Activated CD4-positive, alpha-beta memory T cell treated with anti-CD3 and anti-CD28 coated beads, Interleukin-2, amount 10 ng/mL, durations not matched to agents 7 days and 5 days (primary cell): ENCODE measurements at regions of chr11 and their contacts with region 1.

Region 1: DNA sequence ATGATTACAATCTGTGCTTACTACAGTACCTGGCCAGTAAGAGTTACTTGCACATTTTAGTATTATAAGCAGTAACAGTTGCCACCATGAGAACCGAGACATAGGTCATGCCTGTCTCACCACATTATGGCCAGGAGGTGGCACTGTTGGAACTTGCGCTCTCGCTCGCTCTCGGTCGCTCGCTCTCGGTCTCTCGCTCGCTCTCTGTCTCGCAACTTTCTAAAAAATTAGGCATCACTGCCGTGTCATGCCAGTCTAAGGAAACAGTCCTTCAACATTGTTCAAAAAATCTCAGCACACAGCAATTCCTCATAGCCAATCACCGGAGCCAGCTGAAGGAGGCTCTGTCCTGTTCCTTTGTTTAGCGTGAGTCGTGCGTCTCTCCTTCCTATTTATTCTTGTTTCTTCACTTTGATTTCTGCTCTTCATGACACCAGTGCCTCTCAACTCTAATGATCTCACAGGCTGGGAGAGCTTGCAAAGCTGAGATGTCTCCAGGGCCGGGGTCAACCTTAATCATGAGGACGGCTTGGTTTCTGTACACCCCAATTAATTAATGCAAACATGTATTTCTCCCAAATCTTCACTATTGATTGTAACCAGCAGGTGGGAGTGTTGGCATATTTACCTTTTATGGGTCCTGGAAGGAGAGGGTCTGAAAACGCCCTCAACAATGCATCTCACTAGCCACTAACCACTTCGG is 6.3 kb upstream of the ADAMTS8 start:
- DNase-seq: peak; percentile 74
- H3K4me3 Mint-ChIP-seq: no peak overlapping the region
- H3K27ac Mint-ChIP-seq: no peak overlapping the region
- H3K4me1 Mint-ChIP-seq: peaks cover 25% of the 10 kb centered on the region
- H3K27me3 Mint-ChIP-seq: peaks cover 33% of the 10 kb centered on the region

Region 2: GRCh38 chr11:130213143-130213978 is 221.3 kb before region 1 on chr11:
- CTCF ChIA-PET with region 1: interaction called, 28 read pairs
- POLR2A ChIA-PET with region 1: interaction called, 3 read pairs
- DNase-seq: peak; percentile 71
- H3K4me3 Mint-ChIP-seq: no peak overlapping the region
- H3K27ac Mint-ChIP-seq: no peak overlapping the region
- H3K4me1 Mint-ChIP-seq: no peaks in the 10 kb centered on the region
- H3K27me3 Mint-ChIP-seq: peaks cover 4% of the 10 kb centered on the region

Region 3: DNA sequence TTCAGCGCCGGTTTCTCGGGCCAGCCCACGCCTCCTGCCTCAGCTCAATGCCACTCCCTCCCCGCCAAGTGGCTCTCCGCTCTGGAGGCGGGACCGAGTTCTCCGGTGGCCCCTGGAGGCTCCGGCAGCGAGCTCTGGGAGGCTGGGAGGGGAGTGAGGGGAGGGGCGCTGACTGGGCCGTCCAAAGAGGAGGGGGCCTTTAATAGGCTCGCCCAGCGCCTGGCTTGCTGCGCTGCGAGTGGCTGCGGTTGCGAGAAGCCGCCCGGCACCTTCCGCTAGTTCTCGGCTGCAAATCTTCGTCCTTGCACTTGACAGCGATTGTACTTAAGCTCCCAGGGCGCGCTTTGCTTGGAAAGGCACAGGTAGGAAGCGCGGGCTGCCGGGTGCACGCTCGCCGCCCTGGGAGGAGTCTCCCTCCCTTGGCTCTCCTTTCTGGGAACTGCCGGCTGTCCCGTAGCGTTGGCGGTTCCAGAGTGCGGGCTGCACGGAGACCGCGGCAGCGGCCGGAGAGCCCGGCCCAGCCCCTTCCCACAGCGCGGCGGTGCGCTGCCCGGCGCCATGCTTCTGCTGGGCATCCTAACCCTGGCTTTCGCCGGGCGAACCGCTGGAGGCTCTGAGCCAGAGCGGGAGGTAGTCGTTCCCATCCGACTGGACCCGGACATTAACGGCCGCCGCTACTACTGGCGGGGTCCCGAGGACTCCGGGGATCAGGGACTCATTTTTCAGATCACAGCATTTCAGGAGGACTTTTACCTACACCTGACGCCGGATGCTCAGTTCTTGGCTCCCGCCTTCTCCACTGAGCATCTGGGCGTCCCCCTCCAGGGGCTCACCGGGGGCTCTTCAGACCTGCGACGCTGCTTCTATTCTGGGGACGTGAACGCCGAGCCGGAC is 14.0 kb after region 1 on chr11 and contains the start of gene ADAMTS15:
- CTCF ChIA-PET with region 1: interaction called, 28 read pairs
- POLR2A ChIA-PET with region 1: no interaction called
- DNase-seq: peak; percentile 35
- H3K4me3 Mint-ChIP-seq: peak within 1 kb of the TSS; percentile 48
- H3K27ac Mint-ChIP-seq: no peak within 1 kb of the TSS
- H3K4me1 Mint-ChIP-seq: peaks cover 13% of the 10 kb centered on the region
- H3K27me3 Mint-ChIP-seq: peaks cover 62% of the 10 kb centered on the region
- total RNA-seq, gene ADAMTS15: not detected

Region 4: DNA sequence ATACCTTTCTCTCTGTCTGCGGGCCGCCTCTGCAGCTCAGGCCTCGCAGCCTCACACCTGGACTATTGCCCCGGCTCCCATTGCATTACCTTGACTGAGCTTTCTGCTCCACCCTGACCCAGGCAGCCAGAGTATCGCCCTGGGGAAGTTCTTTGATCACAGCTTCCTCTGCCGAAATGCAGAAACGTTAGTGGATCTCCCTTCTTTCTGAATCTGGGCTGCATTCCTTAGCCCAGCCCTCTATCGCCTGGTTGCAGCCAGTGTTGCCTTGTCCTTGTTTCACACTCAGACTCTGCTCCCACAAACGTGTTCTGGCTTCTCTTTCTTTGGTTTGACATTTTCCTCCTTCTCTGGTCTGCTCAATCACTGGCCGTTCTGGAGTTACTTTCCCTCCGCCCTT is 209.5 kb after region 1 on chr11:
- CTCF ChIA-PET with region 1: no interaction called
- POLR2A ChIA-PET with region 1: no interaction called
- DNase-seq: no peak
- H3K4me3 Mint-ChIP-seq: no peak overlapping the region
- H3K27ac Mint-ChIP-seq: no peak overlapping the region
- H3K4me1 Mint-ChIP-seq: no peaks in the 10 kb centered on the region
- H3K27me3 Mint-ChIP-seq: peaks cover 3% of the 10 kb centered on the region

Region 5: GRCh38 chr11:130850185-130850944 is 415.7 kb after region 1 on chr11:
- CTCF ChIA-PET with region 1: interaction called, 12 read pairs
- POLR2A ChIA-PET with region 1: no interaction called
- DNase-seq: no peak
- H3K4me3 Mint-ChIP-seq: no peak overlapping the region
- H3K27ac Mint-ChIP-seq: no peak overlapping the region
- H3K4me1 Mint-ChIP-seq: peaks cover 2% of the 10 kb centered on the region
- H3K27me3 Mint-ChIP-seq: peaks cover 5% of the 10 kb centered on the region